Heart left ventricle (tissue), 16 donors: ENCODE measurements at regions of chr12 and their contacts with region 1.

Region 1: GRCh38 chr12:4044736-4045730 is 171.8 kb upstream of the PARP11 start:
- DNase-seq: no peak
- ATAC-seq: peak in 2 of 4 donors; percentile 32 to 49
- H3K4me3 ChIP-seq: no peak overlapping the region
- H3K27ac ChIP-seq: no peak overlapping the region
- H3K4me1 ChIP-seq: no peaks in the 10 kb centered on the region
- H3K27me3 ChIP-seq: peaks cover 0 to 12% (median 0%) of the 10 kb centered on the region in 9 donors
- CTCF ChIP-seq: no peak
- POLR2A ChIP-seq: no peak

Region 2: GRCh38 chr12:3988519-3989448 is 56.2 kb before region 1 on chr12:
- intact Hi-C with region 1: loop called in 1 of 10 experiments (anchors 5 kb)
- DNase-seq: no peak
- ATAC-seq: no peak
- H3K4me3 ChIP-seq: no peak overlapping the region
- H3K27ac ChIP-seq: peak overlapping the region in 1 of 12 donors; percentile 10
- H3K4me1 ChIP-seq: no peaks in the 10 kb centered on the region
- H3K27me3 ChIP-seq: peaks cover 0 to 40% (median 4%) of the 10 kb centered on the region in 9 donors
- CTCF ChIP-seq: no peak
- POLR2A ChIP-seq: no peak